ENCODE measurements at regions of chr14 and their contacts with region 1.

Region 1: GRCh38 chr14:105045710-105046326 is 19.4 kb downstream of the GPR132 start:
- DNase-seq: peak; percentile 96
- ATAC-seq: peak; percentile 92
- H3K4me3 Mint-ChIP-seq: no peak overlapping the region
- H3K27ac Mint-ChIP-seq: peak overlapping the region; percentile 22
- H3K4me1 Mint-ChIP-seq: peaks cover 16% of the 10 kb centered on the region
- H3K27me3 Mint-ChIP-seq: peaks cover 9% of the 10 kb centered on the region
- CTCF ChIP-seq: peak; percentile 100

Region 2: DNA sequence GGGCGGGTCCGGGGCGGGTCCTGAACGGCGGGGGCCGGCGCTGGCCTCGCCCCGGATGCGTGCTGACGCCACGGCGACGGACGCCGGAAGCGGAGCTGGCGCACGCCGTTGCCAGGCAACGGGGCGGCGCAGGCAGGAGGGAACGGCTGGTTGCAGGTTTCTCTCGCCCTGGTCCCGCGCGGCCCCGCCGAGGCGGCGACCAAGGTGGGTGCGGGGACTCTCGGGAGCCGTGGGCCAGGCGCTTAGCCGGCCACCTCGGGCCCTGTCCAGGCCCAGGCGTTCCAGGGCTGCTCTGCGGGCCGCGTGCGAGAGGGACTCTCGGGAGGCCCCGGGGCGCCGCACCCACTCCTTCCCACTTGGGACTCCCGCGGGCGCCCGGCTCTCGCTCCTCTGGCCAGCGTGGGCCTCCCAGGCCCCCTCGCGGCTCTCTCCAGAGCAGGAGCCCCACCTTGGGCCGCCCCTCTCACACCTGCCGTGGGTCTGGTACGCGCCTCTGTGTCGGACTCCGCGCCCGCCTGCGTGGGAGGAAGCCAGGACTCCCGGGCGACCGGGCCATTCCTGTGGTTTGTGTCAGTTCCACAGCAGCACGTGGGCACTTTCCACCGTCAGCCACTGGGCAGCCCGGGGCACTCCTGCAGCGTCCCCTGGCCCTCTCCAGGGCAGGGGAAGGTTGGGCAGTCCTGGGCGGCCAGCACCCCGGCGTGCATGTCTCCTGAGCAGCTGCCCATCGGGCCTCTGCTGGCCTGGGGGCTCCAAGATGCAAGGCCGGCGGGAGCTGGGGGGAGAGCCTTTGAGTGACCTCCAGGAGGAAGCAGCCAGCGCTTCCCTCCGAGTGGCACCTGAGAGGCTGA is 59.9 kb before region 1 on chr14 and contains the start of gene CLBA1:
- CTCF ChIA-PET with region 1: interaction called, 30 read pairs
- POLR2A ChIA-PET with region 1: no interaction called
- intact Hi-C with region 1: no loop called
- DNase-seq: peak; percentile 85
- ATAC-seq: peak; percentile 98
- H3K4me3 Mint-ChIP-seq: peak within 1 kb of the TSS; percentile 67
- H3K27ac Mint-ChIP-seq: peak within 1 kb of the TSS; percentile 59
- H3K4me1 Mint-ChIP-seq: peaks cover 3% of the 10 kb centered on the region
- H3K27me3 Mint-ChIP-seq: no peaks in the 10 kb centered on the region
- CTCF ChIP-seq: no peak
- total RNA-seq, gene CLBA1: 0.47 to 0.67 TPM

Region 3: GRCh38 chr14:105020815-105021655 is 24.8 kb before region 1 on chr14 and contains the start of gene CDCA4:
- CTCF ChIA-PET with region 1: interaction called, 51 read pairs
- POLR2A ChIA-PET with region 1: interaction called, 12 read pairs
- intact Hi-C with region 1: no loop called
- DNase-seq: peak; percentile 98
- ATAC-seq: peak; percentile 85
- H3K4me3 Mint-ChIP-seq: peak within 1 kb of the TSS; percentile 99
- H3K27ac Mint-ChIP-seq: peak within 1 kb of the TSS; percentile 95
- H3K4me1 Mint-ChIP-seq: peaks cover 65% of the 10 kb centered on the region
- H3K27me3 Mint-ChIP-seq: no peaks in the 10 kb centered on the region
- CTCF ChIP-seq: peak; percentile 10
- total RNA-seq, gene CDCA4: 59.4 to 63.5 TPM

Region 4: DNA sequence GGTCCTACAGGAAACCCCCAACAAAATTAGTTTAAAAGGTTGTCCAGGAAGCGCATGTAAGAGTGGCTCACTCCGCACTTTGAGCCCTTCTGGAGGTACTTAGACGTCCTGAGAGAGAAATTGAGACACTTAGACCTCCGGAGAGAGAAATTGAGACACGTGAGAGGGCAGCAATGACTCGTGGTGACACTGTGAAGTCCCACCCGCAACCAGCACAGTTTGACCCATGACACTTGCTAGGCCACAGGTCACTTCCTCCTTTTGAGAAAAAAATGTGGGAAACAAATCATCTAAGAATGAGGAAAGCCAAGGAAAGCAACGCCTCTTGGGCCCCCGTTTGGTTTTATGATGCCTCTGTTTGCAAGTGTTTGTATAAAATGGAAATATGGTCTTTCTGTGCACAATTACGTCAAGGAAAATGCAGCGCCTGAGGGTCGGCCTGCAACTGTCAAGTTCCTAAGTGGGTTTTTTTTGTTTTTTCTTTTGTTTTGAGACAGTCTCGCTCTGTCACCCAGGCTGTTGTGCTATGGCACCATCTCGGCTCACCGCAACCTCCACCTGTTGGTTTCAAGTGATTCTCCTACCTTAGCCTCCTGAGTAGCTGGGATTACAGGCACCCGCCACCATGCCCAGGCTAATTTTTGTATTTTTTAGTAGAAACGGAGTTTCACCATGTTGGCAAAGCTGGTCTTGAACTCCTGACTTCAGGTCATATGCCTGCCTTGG is 11.3 kb before region 1 on chr14:
- CTCF ChIA-PET with region 1: interaction called, 58 read pairs
- POLR2A ChIA-PET with region 1: interaction called, 4 read pairs
- intact Hi-C with region 1: no loop called
- DNase-seq: no peak
- ATAC-seq: no peak
- H3K4me3 Mint-ChIP-seq: no peak overlapping the region
- H3K27ac Mint-ChIP-seq: no peak overlapping the region
- H3K4me1 Mint-ChIP-seq: peaks cover 12% of the 10 kb centered on the region
- H3K27me3 Mint-ChIP-seq: peaks cover 3% of the 10 kb centered on the region
- CTCF ChIP-seq: no peak

Region 5: DNA sequence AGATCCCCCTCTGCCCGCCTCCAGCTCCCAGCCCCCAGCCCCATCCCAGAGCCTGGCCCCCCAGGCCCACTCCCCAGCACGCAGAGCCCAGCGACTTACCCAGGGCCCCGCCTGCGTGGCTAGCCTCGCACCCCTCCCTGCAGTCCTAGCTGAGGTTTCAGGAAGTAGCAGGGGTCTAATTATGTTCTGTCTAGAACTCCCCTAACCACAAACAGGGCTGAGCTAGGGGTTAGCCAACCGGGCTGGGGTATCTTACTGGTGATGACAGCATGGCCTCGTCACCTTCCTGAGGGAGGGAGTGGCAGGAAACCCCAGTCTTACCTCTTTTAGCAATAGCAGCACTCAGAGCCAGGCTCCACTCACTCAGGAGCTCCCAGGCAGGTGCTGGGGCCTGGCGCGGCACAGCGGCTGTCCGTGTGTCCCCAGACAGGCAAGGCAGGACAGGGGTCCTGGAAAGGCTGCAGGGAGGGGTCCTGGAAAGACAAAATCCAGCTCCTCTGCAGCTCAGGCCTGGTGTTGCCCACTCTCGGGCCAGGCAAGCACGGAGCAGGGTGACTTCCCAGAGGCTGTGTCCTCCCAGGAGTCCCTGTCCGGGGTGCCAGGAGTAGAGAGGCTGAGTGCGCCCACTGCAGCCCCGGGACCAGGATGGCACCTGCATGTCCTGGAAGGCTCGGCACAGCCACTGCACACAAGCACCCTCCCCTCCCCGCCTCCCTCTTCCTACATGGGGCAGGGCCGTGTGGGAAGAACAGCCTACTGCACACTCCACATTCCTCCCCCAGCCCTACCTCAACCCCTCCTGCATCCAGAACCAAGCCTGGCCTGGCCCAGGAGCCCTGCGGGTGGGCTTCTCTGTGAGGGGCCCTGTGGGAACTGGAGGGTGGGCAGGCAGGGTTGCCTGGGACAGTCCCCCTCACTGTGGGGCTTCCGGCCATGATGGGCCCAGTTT is 19.7 kb after region 1 on chr14 and contains the start of gene GPR132:
- CTCF ChIA-PET with region 1: interaction called, 16 read pairs
- POLR2A ChIA-PET with region 1: interaction called, 6 read pairs
- intact Hi-C with region 1: no loop called
- DNase-seq: peak; percentile 96
- ATAC-seq: peak; percentile 74
- H3K4me3 Mint-ChIP-seq: peak within 1 kb of the TSS; percentile 86
- H3K27ac Mint-ChIP-seq: peak within 1 kb of the TSS; percentile 96
- H3K4me1 Mint-ChIP-seq: peaks cover 62% of the 10 kb centered on the region
- H3K27me3 Mint-ChIP-seq: no peaks in the 10 kb centered on the region
- CTCF ChIP-seq: no peak
- total RNA-seq, gene GPR132: 15.1 to 16.4 TPM